Caco-2 (cell line): ENCODE measurements at regions of chr22 and their contacts with region 1.

Region 1: DNA sequence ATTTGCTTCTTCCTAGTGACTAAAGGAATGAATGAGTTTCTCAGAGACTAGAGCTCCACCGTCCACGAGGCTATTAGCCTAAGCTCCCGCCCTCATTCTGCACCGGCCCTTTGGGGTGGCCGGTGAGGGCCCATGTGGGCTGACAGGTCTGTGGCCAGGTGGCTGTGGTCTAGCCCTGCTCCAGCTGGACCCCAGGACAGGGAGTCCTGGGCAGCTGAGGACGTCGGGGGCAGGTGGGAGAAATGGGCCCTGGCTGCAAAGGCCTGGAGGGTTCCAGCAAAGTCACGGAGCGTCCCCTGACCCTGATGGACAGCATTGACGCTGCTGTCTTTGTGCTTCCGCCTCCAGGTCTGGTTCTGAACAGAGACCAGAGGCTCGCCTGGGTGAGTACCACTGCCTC is 12.2 kb downstream of the SERHL2 start:
- DNase-seq: no peak
- H3K4me3 ChIP-seq: no peak overlapping the region
- H3K4me3 Mint-ChIP-seq: no peak overlapping the region
- H3K27ac Mint-ChIP-seq: no peak overlapping the region
- H3K4me1 ChIP-seq: peaks cover 14% of the 10 kb centered on the region; the same call in 1 of the 2 replicates
- H3K4me1 Mint-ChIP-seq: peaks cover 12% of the 10 kb centered on the region
- H3K27me3 ChIP-seq: no peaks in the 10 kb centered on the region
- H3K27me3 Mint-ChIP-seq: no peaks in the 10 kb centered on the region
- CTCF ChIP-seq: no peak

Region 2: GRCh38 chr22:42419243-42419881 is 146.6 kb before region 1 on chr22:
- CTCF ChIA-PET with region 1: no interaction called
- POLR2A ChIA-PET with region 1: no interaction called
- intact Hi-C with region 1: no loop called
- DNase-seq: no peak
- H3K4me3 ChIP-seq: no peak overlapping the region
- H3K4me3 Mint-ChIP-seq: no peak overlapping the region
- H3K27ac Mint-ChIP-seq: no peak overlapping the region
- H3K4me1 ChIP-seq: no peaks in the 10 kb centered on the region; the same call in none of the 2 replicates
- H3K4me1 Mint-ChIP-seq: peaks cover 7% of the 10 kb centered on the region
- H3K27me3 ChIP-seq: no peaks in the 10 kb centered on the region
- H3K27me3 Mint-ChIP-seq: no peaks in the 10 kb centered on the region
- CTCF ChIP-seq: no peak

Region 3: DNA sequence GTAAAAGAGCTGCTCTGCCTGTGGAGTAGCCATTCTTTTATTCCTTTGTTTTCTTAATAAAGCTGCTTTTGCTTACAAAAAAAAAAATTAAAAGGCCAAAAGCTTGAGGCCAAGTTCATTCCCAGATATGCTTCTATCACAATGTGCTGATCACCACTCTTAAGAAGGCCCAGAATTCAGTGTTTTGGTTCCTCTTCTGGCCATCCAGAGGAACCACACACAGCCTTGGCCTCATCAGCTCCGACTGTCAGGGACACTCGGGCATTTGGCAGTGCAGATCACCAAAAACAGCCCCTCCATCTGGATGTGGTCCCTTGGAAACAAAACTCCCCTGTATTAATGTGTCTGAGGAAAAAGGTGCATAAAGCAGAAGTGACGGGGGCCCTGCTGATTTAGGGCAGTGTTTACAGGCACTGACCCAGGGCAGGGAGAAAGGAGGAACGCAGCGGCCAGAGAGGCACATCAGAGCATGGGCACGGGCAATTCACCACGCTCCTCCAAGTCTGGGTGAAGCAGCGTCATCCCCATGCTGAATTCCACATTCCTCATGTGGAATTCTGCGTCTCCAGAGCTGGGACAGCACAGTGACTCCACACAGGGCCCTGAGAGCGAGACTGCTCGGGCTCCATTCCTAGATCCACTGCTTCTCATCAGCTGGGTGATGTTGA is 31.0 kb after region 1 on chr22:
- CTCF ChIA-PET with region 1: interaction called, 10 read pairs
- POLR2A ChIA-PET with region 1: no interaction called
- intact Hi-C with region 1: no loop called
- DNase-seq: no peak
- H3K4me3 ChIP-seq: no peak overlapping the region
- H3K4me3 Mint-ChIP-seq: no peak overlapping the region
- H3K27ac Mint-ChIP-seq: no peak overlapping the region
- H3K4me1 ChIP-seq: no peaks in the 10 kb centered on the region
- H3K4me1 Mint-ChIP-seq: no peaks in the 10 kb centered on the region
- H3K27me3 ChIP-seq: no peaks in the 10 kb centered on the region
- H3K27me3 Mint-ChIP-seq: no peaks in the 10 kb centered on the region
- CTCF ChIP-seq: no peak

Region 4: GRCh38 chr22:42680648-42681047 is 114.7 kb after region 1 on chr22:
- CTCF ChIA-PET with region 1: no interaction called
- POLR2A ChIA-PET with region 1: no interaction called
- intact Hi-C with region 1: no loop called
- DNase-seq: no peak
- H3K4me3 ChIP-seq: no peak overlapping the region
- H3K4me3 Mint-ChIP-seq: no peak overlapping the region
- H3K27ac Mint-ChIP-seq: no peak overlapping the region
- H3K4me1 ChIP-seq: peaks cover 14% of the 10 kb centered on the region
- H3K4me1 Mint-ChIP-seq: peaks cover 22% of the 10 kb centered on the region
- H3K27me3 ChIP-seq: no peaks in the 10 kb centered on the region
- H3K27me3 Mint-ChIP-seq: no peaks in the 10 kb centered on the region
- CTCF ChIP-seq: no peak